B cell (primary cell): ENCODE measurements at regions of chr10 and their contacts with region 1.

Region 1: DNA sequence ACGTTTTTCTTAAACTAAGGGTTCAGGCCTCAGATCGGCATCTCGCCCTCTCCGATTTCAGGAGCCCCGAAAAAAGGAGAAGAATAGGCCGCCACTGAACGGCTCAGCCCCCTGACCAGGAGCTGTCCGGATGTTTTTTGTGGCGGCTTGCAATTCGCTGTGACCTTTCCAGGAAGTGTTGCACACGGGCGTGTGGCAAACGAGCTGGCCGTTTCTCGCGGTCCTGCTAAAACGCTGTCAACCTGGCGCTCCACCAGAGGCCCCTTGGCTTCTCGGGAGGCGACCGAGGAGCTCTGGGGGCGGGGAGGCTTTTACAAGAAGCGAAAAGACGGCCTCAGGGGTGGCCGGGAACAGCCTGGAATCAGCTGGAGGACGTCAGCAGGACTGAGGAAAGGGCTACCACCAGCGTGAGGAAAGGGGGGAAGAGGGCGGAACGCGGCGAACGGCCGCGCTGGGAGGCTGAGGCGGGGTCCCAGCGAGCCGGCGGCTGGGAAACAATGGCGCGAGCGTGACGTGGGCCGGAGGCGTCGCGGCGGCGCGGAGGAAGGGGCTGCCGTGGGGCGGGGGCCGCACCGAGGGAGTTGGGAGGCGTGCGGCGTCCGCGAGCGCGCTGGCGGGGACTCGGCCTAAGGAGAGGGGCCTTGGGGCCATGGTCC is 493 bp downstream of the NT5C2 start:
- DNase-seq: peak; percentile 75
- ATAC-seq: peak; percentile 56
- H3K4me3 ChIP-seq: peak overlapping the region; percentile 70 to 93 (median 92)
- H3K4me3 Mint-ChIP-seq: peak overlapping the region; percentile 99
- H3K27ac ChIP-seq: peak overlapping the region; percentile 86 to 87
- H3K27ac Mint-ChIP-seq: peak overlapping the region; percentile 98
- H3K4me1 ChIP-seq: peaks cover 20 to 29% of the 10 kb centered on the region in 2 donors
- H3K4me1 Mint-ChIP-seq: peaks cover 40% of the 10 kb centered on the region
- H3K27me3 ChIP-seq: no peaks in the 10 kb centered on the region
- H3K27me3 Mint-ChIP-seq: no peaks in the 10 kb centered on the region
- CTCF ChIP-seq: no peak

Region 2: DNA sequence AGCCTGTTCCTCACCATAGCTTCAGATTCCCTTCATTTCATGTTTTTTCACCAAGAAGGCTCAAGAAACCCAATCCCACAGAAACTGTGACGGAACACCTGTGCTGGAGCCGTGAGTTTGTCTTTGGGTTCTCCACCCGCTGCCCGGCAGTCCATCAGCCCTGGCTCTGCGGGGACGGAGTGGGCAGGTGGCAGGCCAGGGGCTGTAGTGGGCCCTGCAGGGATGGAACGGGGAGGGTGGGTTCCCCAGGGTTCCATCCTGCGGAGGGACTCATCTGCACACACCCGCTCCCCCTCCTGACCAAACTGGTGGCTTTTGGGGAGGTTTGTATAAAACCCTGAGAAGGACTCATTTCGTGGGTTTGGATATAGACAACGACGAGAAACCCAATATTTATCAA is 370.4 kb before region 1 on chr10:
- CTCF ChIA-PET with region 1: no interaction called
- POLR2A ChIA-PET with region 1: no interaction called
- intact Hi-C with region 1: no loop called
- DNase-seq: no peak
- ATAC-seq: no peak
- H3K4me3 ChIP-seq: no peak overlapping the region
- H3K4me3 Mint-ChIP-seq: no peak overlapping the region
- H3K27ac ChIP-seq: no peak overlapping the region
- H3K27ac Mint-ChIP-seq: no peak overlapping the region
- H3K4me1 ChIP-seq: peaks cover 5 to 9% of the 10 kb centered on the region in 2 donors
- H3K4me1 Mint-ChIP-seq: peaks cover 10% of the 10 kb centered on the region
- H3K27me3 ChIP-seq: no peaks in the 10 kb centered on the region
- H3K27me3 Mint-ChIP-seq: no peaks in the 10 kb centered on the region
- CTCF ChIP-seq: no peak

Region 3: DNA sequence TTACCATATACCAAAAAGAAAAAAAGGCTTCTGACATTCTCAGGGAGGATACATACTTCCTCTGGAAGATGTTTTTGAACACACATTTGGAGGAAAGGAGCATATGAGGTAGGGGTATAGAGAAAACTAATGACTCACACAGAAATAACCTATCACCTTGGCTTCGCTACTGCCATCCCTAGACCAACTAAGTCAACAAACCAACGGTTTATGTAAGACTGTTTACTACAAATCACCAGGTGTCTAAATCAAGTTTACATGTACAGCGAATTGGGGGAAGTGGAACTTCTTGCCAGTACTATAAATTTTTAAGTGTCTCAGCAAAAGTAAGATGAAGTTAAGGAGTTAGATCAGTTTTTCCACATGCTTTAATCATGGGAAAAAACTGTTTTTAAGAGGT is 96.4 kb before region 1 on chr10:
- CTCF ChIA-PET with region 1: no interaction called
- POLR2A ChIA-PET with region 1: no interaction called
- intact Hi-C with region 1: no loop called
- DNase-seq: no peak
- ATAC-seq: no peak
- H3K4me3 ChIP-seq: no peak overlapping the region
- H3K4me3 Mint-ChIP-seq: peak overlapping the region; percentile 8
- H3K27ac ChIP-seq: no peak overlapping the region
- H3K27ac Mint-ChIP-seq: peak overlapping the region; percentile 27
- H3K4me1 ChIP-seq: no peaks in the 10 kb centered on the region
- H3K4me1 Mint-ChIP-seq: peaks cover 16% of the 10 kb centered on the region
- H3K27me3 ChIP-seq: no peaks in the 10 kb centered on the region
- H3K27me3 Mint-ChIP-seq: no peaks in the 10 kb centered on the region
- CTCF ChIP-seq: no peak

Region 4: GRCh38 chr10:103175580-103176285 is 16.8 kb before region 1 on chr10:
- CTCF ChIA-PET with region 1: interaction called, 4 read pairs
- POLR2A ChIA-PET with region 1: interaction called, 23 read pairs
- intact Hi-C with region 1: loop called (anchors 2 kb)
- DNase-seq: no peak
- ATAC-seq: no peak
- H3K4me3 ChIP-seq: no peak overlapping the region
- H3K4me3 Mint-ChIP-seq: no peak overlapping the region
- H3K27ac ChIP-seq: no peak overlapping the region
- H3K27ac Mint-ChIP-seq: no peak overlapping the region
- H3K4me1 ChIP-seq: peaks cover 18 to 19% of the 10 kb centered on the region in 2 donors
- H3K4me1 Mint-ChIP-seq: peaks cover 30% of the 10 kb centered on the region
- H3K27me3 ChIP-seq: no peaks in the 10 kb centered on the region
- H3K27me3 Mint-ChIP-seq: no peaks in the 10 kb centered on the region
- CTCF ChIP-seq: no peak

Region 5: GRCh38 chr10:103181244-103181643 is 11.3 kb before region 1 on chr10:
- CTCF ChIA-PET with region 1: interaction called, 4 read pairs
- POLR2A ChIA-PET with region 1: interaction called, 23 read pairs
- intact Hi-C with region 1: loop called (anchors 1 kb)
- DNase-seq: peak; percentile 77
- ATAC-seq: peak; percentile 94
- H3K4me3 ChIP-seq: peak overlapping the region in 2 of 5 experiments; percentile 14 to 25
- H3K4me3 Mint-ChIP-seq: peak overlapping the region; percentile 83
- H3K27ac ChIP-seq: peak overlapping the region; percentile 56 to 80
- H3K27ac Mint-ChIP-seq: peak overlapping the region; percentile 86
- H3K4me1 ChIP-seq: peaks cover 48 to 52% of the 10 kb centered on the region in 2 donors
- H3K4me1 Mint-ChIP-seq: peaks cover 66% of the 10 kb centered on the region
- H3K27me3 ChIP-seq: no peaks in the 10 kb centered on the region
- H3K27me3 Mint-ChIP-seq: no peaks in the 10 kb centered on the region
- CTCF ChIP-seq: no peak

Region 6: GRCh38 chr10:103592186-103593021 is 399.8 kb after region 1 on chr10:
- CTCF ChIA-PET with region 1: no interaction called
- POLR2A ChIA-PET with region 1: no interaction called
- intact Hi-C with region 1: no loop called
- DNase-seq: peak; percentile 57
- ATAC-seq: peak; percentile 77
- H3K4me3 ChIP-seq: no peak overlapping the region
- H3K4me3 Mint-ChIP-seq: no peak overlapping the region
- H3K27ac ChIP-seq: no peak overlapping the region
- H3K27ac Mint-ChIP-seq: no peak overlapping the region
- H3K4me1 ChIP-seq: no peaks in the 10 kb centered on the region
- H3K4me1 Mint-ChIP-seq: no peaks in the 10 kb centered on the region
- H3K27me3 ChIP-seq: no peaks in the 10 kb centered on the region
- H3K27me3 Mint-ChIP-seq: no peaks in the 10 kb centered on the region
- CTCF ChIP-seq: peak; percentile 73

Region 7: GRCh38 chr10:103678178-103678526 is 485.6 kb after region 1 on chr10:
- CTCF ChIA-PET with region 1: no interaction called
- POLR2A ChIA-PET with region 1: no interaction called
- intact Hi-C with region 1: loop called (anchors 5 kb)
- DNase-seq: peak; percentile 96
- ATAC-seq: peak; percentile 93
- H3K4me3 ChIP-seq: peak overlapping the region in 4 of 5 experiments; percentile 21 to 57 (median 42)
- H3K4me3 Mint-ChIP-seq: peak overlapping the region; percentile 90
- H3K27ac ChIP-seq: peak overlapping the region; percentile 74 to 80
- H3K27ac Mint-ChIP-seq: peak overlapping the region; percentile 94
- H3K4me1 ChIP-seq: peaks cover 30 to 31% of the 10 kb centered on the region in 2 donors
- H3K4me1 Mint-ChIP-seq: peaks cover 33% of the 10 kb centered on the region
- H3K27me3 ChIP-seq: no peaks in the 10 kb centered on the region
- H3K27me3 Mint-ChIP-seq: no peaks in the 10 kb centered on the region
- CTCF ChIP-seq: no peak